ENCODE measurements at regions of chr17 and their contacts with region 1.

Region 1: GRCh38 chr17:1488030-1488863 is 4.2 kb downstream of the MYO1C start:
- DNase-seq: peak; percentile 66 to 78 (median 71)
- H3K4me3 ChIP-seq: peak overlapping the region; percentile 27 to 54
- H3K4me3 Mint-ChIP-seq: peak overlapping the region; percentile 82 to 91 (median 88)
- H3K27ac ChIP-seq: peak overlapping the region; percentile 72
- H3K27ac Mint-ChIP-seq: peak overlapping the region; percentile 37 to 97 (median 88)
- H3K4me1 ChIP-seq: peaks cover 56% of the 10 kb centered on the region
- H3K4me1 Mint-ChIP-seq: peaks cover 19 to 65% (median 41%) of the 10 kb centered on the region in 4 donors
- H3K27me3 ChIP-seq: no peaks in the 10 kb centered on the region
- H3K27me3 Mint-ChIP-seq: no peaks in the 10 kb centered on the region

Region 2: GRCh38 chr17:1399679-1400512 is 88.4 kb before region 1 on chr17 and contains the start of gene YWHAE:
- CTCF ChIA-PET with region 1: no interaction called
- POLR2A ChIA-PET with region 1: interaction called, 14 read pairs
- intact Hi-C with region 1: loop called (anchors 1 kb)
- DNase-seq: peak; percentile 93 to 96 (median 94)
- H3K4me3 ChIP-seq: peak within 1 kb of the TSS; percentile 76 to 100
- H3K4me3 Mint-ChIP-seq: peak within 1 kb of the TSS; percentile 96 to 99 (median 98)
- H3K27ac ChIP-seq: peak within 1 kb of the TSS; percentile 95
- H3K27ac Mint-ChIP-seq: peak within 1 kb of the TSS; percentile 97 to 100 (median 98)
- H3K4me1 ChIP-seq: peaks cover 41% of the 10 kb centered on the region
- H3K4me1 Mint-ChIP-seq: peaks cover 23 to 42% (median 33%) of the 10 kb centered on the region in 4 donors
- H3K27me3 ChIP-seq: no peaks in the 10 kb centered on the region
- H3K27me3 Mint-ChIP-seq: peaks cover 0 to 3% of the 10 kb centered on the region in 2 donors
- total RNA-seq, gene YWHAE: 142 to 143 TPM

Region 3: GRCh38 chr17:1684378-1685189 is 196.3 kb after region 1 on chr17 and contains the start of gene PRPF8:
- CTCF ChIA-PET with region 1: no interaction called
- POLR2A ChIA-PET with region 1: no interaction called
- intact Hi-C with region 1: no loop called
- DNase-seq: peak; percentile 98 to 99 (median 99)
- H3K4me3 ChIP-seq: peak within 1 kb of the TSS; percentile 83 to 96
- H3K4me3 Mint-ChIP-seq: peak within 1 kb of the TSS; percentile 97 to 99 (median 99)
- H3K27ac ChIP-seq: peak within 1 kb of the TSS; percentile 96
- H3K27ac Mint-ChIP-seq: peak within 1 kb of the TSS; percentile 93 to 100 (median 99)
- H3K4me1 ChIP-seq: peaks cover 29% of the 10 kb centered on the region
- H3K4me1 Mint-ChIP-seq: peaks cover 32 to 56% (median 41%) of the 10 kb centered on the region in 4 donors
- H3K27me3 ChIP-seq: no peaks in the 10 kb centered on the region
- H3K27me3 Mint-ChIP-seq: no peaks in the 10 kb centered on the region
- total RNA-seq, gene PRPF8: 429 to 464 TPM

Measured in CD4-positive, alpha-beta memory T cell (primary cell).